ENCODE measurements at regions of chr12 and their contacts with region 1.

Region 1: GRCh38 chr12:104456417-104456949 is at the start of gene CHST11:
- DNase-seq: peak; percentile 77 to 94
- H3K4me3 ChIP-seq: peak within 1 kb of the TSS; percentile 66 to 96
- H3K27ac ChIP-seq: peak within 1 kb of the TSS; percentile 82 to 96
- H3K4me1 ChIP-seq: peaks cover 2 to 16% of the 10 kb centered on the region in 2 donors
- H3K27me3 ChIP-seq: no peaks in the 10 kb centered on the region
- CTCF ChIP-seq: peak; percentile 42 to 70 (median 60)
- total RNA-seq, gene CHST11: 63.2 TPM

Region 2: GRCh38 chr12:104201238-104202001 is 255.1 kb before region 1 on chr12:
- intact Hi-C with region 1: loop called (anchors 10 kb)
- DNase-seq: peak in 1 of 2 donors; percentile 69
- H3K4me3 ChIP-seq: no peak overlapping the region
- H3K27ac ChIP-seq: no peak overlapping the region
- H3K4me1 ChIP-seq: peaks cover 0 to 14% of the 10 kb centered on the region in 2 donors
- H3K27me3 ChIP-seq: no peaks in the 10 kb centered on the region
- CTCF ChIP-seq: peak; percentile 80 to 84 (median 83)

Region 3: DNA sequence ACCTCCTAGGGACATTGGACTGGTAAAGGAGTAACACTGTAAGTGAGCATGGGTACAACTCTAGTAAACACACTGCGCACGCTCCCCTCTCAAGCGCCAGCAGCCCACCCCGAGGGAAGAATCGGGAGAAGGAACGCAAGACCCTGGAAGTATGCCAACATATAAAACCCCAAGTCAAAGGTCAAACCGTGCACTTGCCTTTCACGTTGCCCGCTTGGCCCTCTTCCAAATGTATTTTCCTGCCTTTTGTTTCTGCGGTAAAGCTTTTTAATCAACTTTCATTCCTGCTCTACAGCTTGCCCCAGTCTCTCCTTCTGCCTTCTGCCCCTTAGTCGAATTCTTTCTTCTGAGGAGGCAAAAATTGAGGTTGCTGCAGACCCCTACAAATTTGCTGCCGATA is 17.3 kb before region 1 on chr12:
- intact Hi-C with region 1: no loop called
- DNase-seq: no peak
- H3K4me3 ChIP-seq: no peak overlapping the region
- H3K27ac ChIP-seq: no peak overlapping the region
- H3K4me1 ChIP-seq: no peaks in the 10 kb centered on the region
- H3K27me3 ChIP-seq: no peaks in the 10 kb centered on the region
- CTCF ChIP-seq: no peak

Region 4: DNA sequence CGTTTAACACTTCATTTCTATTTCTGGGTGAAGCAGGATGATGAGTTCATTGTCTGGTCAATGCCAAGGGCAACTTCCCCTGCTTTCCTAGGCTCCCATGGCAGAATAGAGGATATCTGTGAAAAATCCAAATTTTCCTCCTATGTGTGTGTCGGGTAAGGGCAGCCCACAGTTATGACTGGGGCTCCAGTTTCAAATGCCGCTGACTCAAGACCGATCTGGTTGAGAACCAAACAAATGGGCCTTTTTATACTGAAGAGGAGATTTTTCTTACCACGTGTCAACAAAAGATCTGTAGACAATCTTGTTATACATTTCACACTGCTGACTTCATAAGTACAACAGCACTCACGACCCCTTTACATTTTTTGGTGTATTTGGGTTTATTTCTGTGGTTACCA is 121.1 kb after region 1 on chr12:
- intact Hi-C with region 1: no loop called
- DNase-seq: no peak
- H3K4me3 ChIP-seq: no peak overlapping the region
- H3K27ac ChIP-seq: no peak overlapping the region
- H3K4me1 ChIP-seq: no peaks in the 10 kb centered on the region
- H3K27me3 ChIP-seq: no peaks in the 10 kb centered on the region
- CTCF ChIP-seq: no peak

Region 5: GRCh38 chr12:104588068-104588920 is 131.8 kb after region 1 on chr12:
- intact Hi-C with region 1: no loop called
- DNase-seq: no peak
- H3K4me3 ChIP-seq: no peak overlapping the region
- H3K27ac ChIP-seq: no peak overlapping the region
- H3K4me1 ChIP-seq: peaks cover 0 to 7% of the 10 kb centered on the region in 2 donors
- H3K27me3 ChIP-seq: no peaks in the 10 kb centered on the region
- CTCF ChIP-seq: no peak

Region 6: GRCh38 chr12:104604070-104604994 is 147.8 kb after region 1 on chr12:
- intact Hi-C with region 1: loop called (anchors 5 kb)
- DNase-seq: peak; percentile 70 to 91
- H3K4me3 ChIP-seq: peak overlapping the region in 1 of 2 donors; percentile 30
- H3K27ac ChIP-seq: peak overlapping the region; percentile 74 to 81
- H3K4me1 ChIP-seq: peaks cover 0 to 22% of the 10 kb centered on the region in 2 donors
- H3K27me3 ChIP-seq: no peaks in the 10 kb centered on the region
- CTCF ChIP-seq: no peak

Region 7: GRCh38 chr12:104695453-104696148 is 239.1 kb after region 1 on chr12:
- intact Hi-C with region 1: loop called (anchors 5 kb)
- DNase-seq: peak; percentile 62 to 91
- H3K4me3 ChIP-seq: no peak overlapping the region
- H3K27ac ChIP-seq: peak overlapping the region; percentile 25 to 41
- H3K4me1 ChIP-seq: peaks cover 3 to 23% of the 10 kb centered on the region in 2 donors
- H3K27me3 ChIP-seq: no peaks in the 10 kb centered on the region
- CTCF ChIP-seq: no peak

Region 8: GRCh38 chr12:105107494-105108371 is 651.2 kb after region 1 on chr12 and contains the start of gene WASHC4:
- intact Hi-C with region 1: loop called (anchors 2 kb)
- DNase-seq: peak; percentile 77 to 96
- H3K4me3 ChIP-seq: peak within 1 kb of the TSS; percentile 83 to 94
- H3K27ac ChIP-seq: peak within 1 kb of the TSS; percentile 97 to 98
- H3K4me1 ChIP-seq: peaks cover 6 to 11% of the 10 kb centered on the region in 2 donors
- H3K27me3 ChIP-seq: no peaks in the 10 kb centered on the region
- CTCF ChIP-seq: no peak
- total RNA-seq, gene WASHC4: 22.8 TPM

Measured in ascending aorta (tissue), 2 donors.